ENCODE measurements at regions of chr2 and their contacts with region 1.

Region 1: GRCh38 chr2:38665854-38666555 is at the start of gene GALM:
- DNase-seq: peak; percentile 8 to 57 (median 47)
- ATAC-seq: peak; percentile 39
- H3K4me3 ChIP-seq: peak within 1 kb of the TSS; percentile 76
- H3K4me3 Mint-ChIP-seq: peak within 1 kb of the TSS; percentile 85 to 97 (median 90)
- H3K27ac ChIP-seq: peak within 1 kb of the TSS; percentile 75
- H3K27ac Mint-ChIP-seq: peak within 1 kb of the TSS; percentile 82 to 96 (median 92)
- H3K4me1 ChIP-seq: peaks cover 9 to 43% of the 10 kb centered on the region in 2 donors
- H3K4me1 Mint-ChIP-seq: peaks cover 30 to 72% (median 53%) of the 10 kb centered on the region in 7 donors
- H3K27me3 ChIP-seq: no peaks in the 10 kb centered on the region
- H3K27me3 Mint-ChIP-seq: no peaks in the 10 kb centered on the region
- total RNA-seq, gene GALM: 4.3 to 52.5 (median 14.4) TPM

Region 2: DNA sequence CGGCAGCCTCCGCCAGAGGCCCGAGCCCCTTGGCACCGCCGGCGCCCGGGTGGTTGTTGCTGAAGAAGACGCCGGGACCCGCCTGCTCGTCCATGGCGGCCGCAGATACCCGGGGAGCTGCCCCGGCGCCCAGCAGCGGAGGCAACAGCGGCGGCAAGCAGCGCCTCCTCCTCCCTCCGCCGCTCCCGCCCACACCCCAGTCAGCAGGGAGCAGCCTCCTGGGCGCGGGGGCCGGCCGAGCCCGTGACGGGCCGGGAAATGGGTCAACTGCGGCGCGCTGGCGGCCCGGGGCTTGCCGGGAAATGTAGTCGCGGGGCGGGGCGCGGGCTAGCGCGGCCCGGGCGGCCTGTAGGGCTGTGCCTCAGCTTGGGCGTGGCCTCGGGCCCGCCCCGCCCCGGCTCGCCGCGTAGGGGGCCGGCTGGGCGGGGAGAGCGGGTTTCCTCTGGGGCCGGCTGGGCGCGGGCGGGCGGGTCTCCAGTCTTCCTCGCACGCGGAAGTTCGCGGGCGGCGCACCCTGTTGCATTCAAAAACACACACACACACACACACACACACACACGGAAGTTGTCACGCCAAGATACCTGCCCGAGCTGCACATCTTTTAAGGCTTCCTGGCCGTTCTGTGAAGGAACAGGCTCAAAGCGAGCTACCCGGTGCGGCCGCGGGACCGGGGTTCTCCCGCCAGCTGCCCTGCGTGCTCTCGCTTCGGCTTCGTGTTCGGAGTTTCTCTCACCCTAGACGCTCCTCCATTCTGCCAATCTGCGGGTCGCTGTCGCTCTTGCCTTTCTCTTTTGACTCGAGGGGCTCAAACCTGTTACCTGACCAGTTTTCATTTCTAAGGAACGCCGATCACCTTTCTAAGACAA is 1699.4 kb before region 1 on chr2 and contains the start of gene STRN:
- CTCF ChIA-PET with region 1: no interaction called
- POLR2A ChIA-PET with region 1: no interaction called
- intact Hi-C with region 1: loop called in 1 of 2 experiments (anchors 2 kb)
- DNase-seq: peak; percentile 96 to 99 (median 99)
- ATAC-seq: peak; percentile 97
- H3K4me3 ChIP-seq: peak within 1 kb of the TSS; percentile 89
- H3K4me3 Mint-ChIP-seq: peak within 1 kb of the TSS; percentile 92 to 99 (median 98)
- H3K27ac ChIP-seq: peak within 1 kb of the TSS; percentile 90
- H3K27ac Mint-ChIP-seq: peak within 1 kb of the TSS; percentile 96 to 100 (median 98)
- H3K4me1 ChIP-seq: peaks cover 8 to 19% of the 10 kb centered on the region in 2 donors
- H3K4me1 Mint-ChIP-seq: peaks cover 35 to 57% (median 48%) of the 10 kb centered on the region in 7 donors
- H3K27me3 ChIP-seq: no peaks in the 10 kb centered on the region
- H3K27me3 Mint-ChIP-seq: no peaks in the 10 kb centered on the region
- total RNA-seq, gene STRN: 23.0 to 35.0 (median 30.9) TPM

Region 3: GRCh38 chr2:38602732-38603401 is 63.1 kb before region 1 on chr2 and contains the start of gene HNRNPLL:
- CTCF ChIA-PET with region 1: interaction called, 7 read pairs
- POLR2A ChIA-PET with region 1: interaction called, 30 read pairs
- intact Hi-C with region 1: loop called (anchors 1 kb)
- DNase-seq: peak; percentile 86 to 98 (median 91)
- ATAC-seq: peak; percentile 91
- H3K4me3 ChIP-seq: peak within 1 kb of the TSS; percentile 86
- H3K4me3 Mint-ChIP-seq: peak within 1 kb of the TSS; percentile 88 to 97 (median 95)
- H3K27ac ChIP-seq: peak within 1 kb of the TSS; percentile 72
- H3K27ac Mint-ChIP-seq: peak within 1 kb of the TSS; percentile 82 to 94 (median 90)
- H3K4me1 ChIP-seq: peaks cover 11 to 15% of the 10 kb centered on the region in 2 donors
- H3K4me1 Mint-ChIP-seq: peaks cover 29 to 57% (median 50%) of the 10 kb centered on the region in 7 donors
- H3K27me3 ChIP-seq: no peaks in the 10 kb centered on the region
- H3K27me3 Mint-ChIP-seq: no peaks in the 10 kb centered on the region
- total RNA-seq, gene HNRNPLL: 10.1 to 66.8 (median 30.2) TPM

Region 4: DNA sequence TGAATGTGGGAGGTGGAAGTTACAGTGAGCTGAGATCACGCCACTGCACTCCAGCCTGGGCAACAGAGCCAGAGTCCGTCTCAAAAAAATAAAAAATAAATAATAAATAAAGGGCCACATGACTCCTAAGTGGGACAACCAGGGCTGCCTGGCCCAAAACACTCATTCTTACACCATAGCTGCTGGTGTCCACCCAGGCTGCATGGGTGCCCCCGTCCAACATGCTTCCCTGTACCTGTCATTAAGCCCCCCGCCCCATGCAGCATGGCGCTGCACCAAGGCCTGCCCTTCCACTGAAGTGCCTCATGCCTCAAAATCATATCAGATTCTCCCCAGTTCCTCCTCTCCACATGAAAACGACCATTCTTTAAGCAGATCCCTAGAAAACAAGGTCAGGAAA is 10.7 kb after region 1 on chr2:
- CTCF ChIA-PET with region 1: no interaction called
- POLR2A ChIA-PET with region 1: interaction called, 14 read pairs
- intact Hi-C with region 1: loop called in 1 of 2 experiments (anchors 1 kb)
- DNase-seq: no peak
- ATAC-seq: no peak
- H3K4me3 ChIP-seq: no peak overlapping the region
- H3K4me3 Mint-ChIP-seq: peak overlapping the region in 1 of 10 donors; percentile 1
- H3K27ac ChIP-seq: no peak overlapping the region
- H3K27ac Mint-ChIP-seq: peak overlapping the region in 4 of 9 donors; percentile 27 to 56 (median 34)
- H3K4me1 ChIP-seq: peaks cover 12 to 25% of the 10 kb centered on the region in 2 donors
- H3K4me1 Mint-ChIP-seq: peaks cover 12 to 64% (median 40%) of the 10 kb centered on the region in 7 donors
- H3K27me3 ChIP-seq: no peaks in the 10 kb centered on the region
- H3K27me3 Mint-ChIP-seq: no peaks in the 10 kb centered on the region

Region 5: GRCh38 chr2:38690499-38691294 is 24.7 kb after region 1 on chr2:
- CTCF ChIA-PET with region 1: no interaction called
- POLR2A ChIA-PET with region 1: no interaction called
- intact Hi-C with region 1: no loop called
- DNase-seq: no peak
- ATAC-seq: no peak
- H3K4me3 ChIP-seq: no peak overlapping the region
- H3K4me3 Mint-ChIP-seq: peak overlapping the region in 1 of 10 donors; percentile 26
- H3K27ac ChIP-seq: no peak overlapping the region
- H3K27ac Mint-ChIP-seq: peak overlapping the region in 2 of 9 donors; percentile 54 to 77
- H3K4me1 ChIP-seq: peaks cover 0 to 50% of the 10 kb centered on the region in 2 donors
- H3K4me1 Mint-ChIP-seq: peaks cover 7 to 50% (median 26%) of the 10 kb centered on the region in 7 donors
- H3K27me3 ChIP-seq: no peaks in the 10 kb centered on the region
- H3K27me3 Mint-ChIP-seq: no peaks in the 10 kb centered on the region

Region 6: GRCh38 chr2:38709567-38710194 is 43.7 kb after region 1 on chr2:
- CTCF ChIA-PET with region 1: interaction called, 4 read pairs
- POLR2A ChIA-PET with region 1: interaction called, 6 read pairs
- intact Hi-C with region 1: loop called (anchors 1 to 2 kb)
- DNase-seq: peak in 7 of 9 donors; percentile 64 to 81 (median 77)
- ATAC-seq: peak; percentile 87
- H3K4me3 ChIP-seq: peak overlapping the region; percentile 21
- H3K4me3 Mint-ChIP-seq: peak overlapping the region; percentile 67 to 86 (median 73)
- H3K27ac ChIP-seq: peak overlapping the region; percentile 15
- H3K27ac Mint-ChIP-seq: peak overlapping the region; percentile 81 to 95 (median 91)
- H3K4me1 ChIP-seq: peaks cover 24 to 31% of the 10 kb centered on the region in 2 donors
- H3K4me1 Mint-ChIP-seq: peaks cover 23 to 70% (median 58%) of the 10 kb centered on the region in 7 donors
- H3K27me3 ChIP-seq: no peaks in the 10 kb centered on the region
- H3K27me3 Mint-ChIP-seq: no peaks in the 10 kb centered on the region

Region 7: GRCh38 chr2:38875576-38876367 is 209.8 kb after region 1 on chr2 and contains the starts of genes DHX57 and MORN2:
- CTCF ChIA-PET with region 1: no interaction called
- POLR2A ChIA-PET with region 1: no interaction called
- intact Hi-C with region 1: loop called in 1 of 2 experiments (anchors 10 kb)
- DNase-seq: peak; percentile 64 to 83 (median 79)
- ATAC-seq: peak; percentile 98
- H3K4me3 ChIP-seq: peak within 1 kb of the TSS; percentile 91
- H3K4me3 Mint-ChIP-seq: peak within 1 kb of the TSS; percentile 94 to 100 (median 96)
- H3K27ac ChIP-seq: peak within 1 kb of the TSS; percentile 69
- H3K27ac Mint-ChIP-seq: peak within 1 kb of the TSS; percentile 82 to 99 (median 95)
- H3K4me1 ChIP-seq: peaks cover 11 to 14% of the 10 kb centered on the region in 2 donors
- H3K4me1 Mint-ChIP-seq: peaks cover 13 to 48% (median 32%) of the 10 kb centered on the region in 7 donors
- H3K27me3 ChIP-seq: no peaks in the 10 kb centered on the region
- H3K27me3 Mint-ChIP-seq: no peaks in the 10 kb centered on the region
- total RNA-seq, gene DHX57: 12.9 to 19.8 (median 18.9) TPM
- total RNA-seq, gene MORN2: 1.5 to 2.7 (median 2.1) TPM

Measured in naive thymus-derived CD4-positive, alpha-beta T cell (primary cell).